HepG2 (cell line): ENCODE measurements at regions of chr17 and their contacts with region 1.

Region 1: GRCh38 chr17:58631523-58632323 is 60.1 kb downstream of the TEX14 start:
- DNase-seq: peak; percentile 99
- ATAC-seq: peak; percentile 98
- H3K4me3 ChIP-seq: peak overlapping the region; percentile 52 to 71 (median 71)
- H3K27ac ChIP-seq: peak overlapping the region; percentile 96
- H3K4me1 ChIP-seq: peaks cover 25% of the 10 kb centered on the region
- H3K27me3 ChIP-seq: no peaks in the 10 kb centered on the region
- CTCF ChIP-seq: peak; percentile 56
- EP300 ChIP-seq: peak; percentile 39 to 83; a peak in 3 of 4 replicates
- POLR2A ChIP-seq: peak; percentile 100
- RAD21 ChIP-seq: peak; percentile 82

Region 2: GRCh38 chr17:58487589-58488427 is 143.9 kb before region 1 on chr17 and contains the start of gene HSF5:
- CTCF ChIA-PET with region 1: no interaction called
- POLR2A ChIA-PET with region 1: no interaction called
- in situ Hi-C with region 1: no loop called
- intact Hi-C with region 1: no loop called
- DNase-seq: no peak
- ATAC-seq: peak; percentile 28
- H3K4me3 ChIP-seq: no peak within 1 kb of the TSS
- H3K27ac ChIP-seq: no peak within 1 kb of the TSS
- H3K4me1 ChIP-seq: peaks cover 13% of the 10 kb centered on the region
- H3K27me3 ChIP-seq: no peaks in the 10 kb centered on the region
- CTCF ChIP-seq: no peak
- EP300 ChIP-seq: no peak
- POLR2A ChIP-seq: no peak
- RAD21 ChIP-seq: no peak
- total RNA-seq, gene HSF5: not detected in 2 replicates

Region 3: GRCh38 chr17:58531661-58532554 is 99.8 kb before region 1 on chr17:
- CTCF ChIA-PET with region 1: no interaction called
- POLR2A ChIA-PET with region 1: interaction called, 73 read pairs
- in situ Hi-C with region 1: no loop called
- intact Hi-C with region 1: no loop called
- DNase-seq: no peak
- ATAC-seq: peak; percentile 77
- H3K4me3 ChIP-seq: peak overlapping the region; percentile 35 to 68 (median 48); a peak in 5 of 6 replicates
- H3K27ac ChIP-seq: no peak overlapping the region
- H3K4me1 ChIP-seq: peaks cover 65% of the 10 kb centered on the region
- H3K27me3 ChIP-seq: peaks cover 9 to 53% of the 10 kb centered on the region in 2 experiments; a peak in 3 of 5 replicates
- CTCF ChIP-seq: no peak
- EP300 ChIP-seq: no peak
- POLR2A ChIP-seq: no peak
- RAD21 ChIP-seq: no peak; the same call in 1 of the 2 replicates

Region 4: DNA sequence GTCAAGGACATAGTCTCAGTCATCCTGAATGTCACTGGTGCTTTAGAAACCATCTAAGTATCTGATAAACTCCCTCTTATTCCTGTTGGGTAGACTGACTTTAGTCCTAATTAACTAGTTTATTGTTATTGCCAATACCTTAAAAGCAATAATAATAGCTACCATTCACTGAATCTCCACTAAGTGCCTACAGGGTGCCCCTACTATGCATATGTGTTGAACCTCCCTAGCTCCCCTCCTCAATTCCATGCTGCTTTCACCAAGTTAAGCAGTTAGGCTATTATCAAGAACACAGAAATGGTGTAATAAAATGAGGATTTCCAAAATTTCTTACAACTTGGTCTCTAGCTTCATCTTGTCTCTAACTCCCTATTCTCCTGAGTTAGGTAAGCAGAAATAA is 29.7 kb before region 1 on chr17:
- CTCF ChIA-PET with region 1: no interaction called
- POLR2A ChIA-PET with region 1: interaction called, 13 read pairs
- in situ Hi-C with region 1: no loop called
- intact Hi-C with region 1: no loop called
- DNase-seq: no peak
- ATAC-seq: no peak
- H3K4me3 ChIP-seq: no peak overlapping the region
- H3K27ac ChIP-seq: no peak overlapping the region
- H3K4me1 ChIP-seq: no peaks in the 10 kb centered on the region
- H3K27me3 ChIP-seq: no peaks in the 10 kb centered on the region
- CTCF ChIP-seq: no peak
- EP300 ChIP-seq: no peak
- POLR2A ChIP-seq: no peak
- RAD21 ChIP-seq: no peak

Region 5: DNA sequence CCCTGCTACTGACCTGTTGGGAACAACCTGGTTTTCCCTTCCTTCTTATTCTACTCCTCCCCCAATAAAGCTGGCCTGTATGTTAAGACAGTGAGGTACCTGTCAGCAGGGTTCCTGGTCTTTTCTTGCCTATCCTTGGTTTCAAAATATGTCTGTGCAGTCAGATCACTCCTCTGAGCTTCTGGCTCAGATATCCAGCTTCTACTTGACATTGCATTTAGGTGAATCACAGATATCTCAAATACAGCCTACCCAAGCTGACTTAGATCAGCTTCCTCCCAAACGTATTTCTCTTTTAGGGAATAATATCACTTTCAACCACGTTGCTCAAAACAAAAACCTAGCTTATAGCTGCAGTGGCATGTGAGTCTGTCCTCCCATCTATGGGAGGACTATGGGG is 11.4 kb after region 1 on chr17:
- CTCF ChIA-PET with region 1: no interaction called
- POLR2A ChIA-PET with region 1: interaction called, 21 read pairs
- in situ Hi-C with region 1: no loop called
- intact Hi-C with region 1: no loop called
- DNase-seq: no peak
- ATAC-seq: no peak
- H3K4me3 ChIP-seq: no peak overlapping the region
- H3K27ac ChIP-seq: no peak overlapping the region
- H3K4me1 ChIP-seq: no peaks in the 10 kb centered on the region
- H3K27me3 ChIP-seq: no peaks in the 10 kb centered on the region; a peak in 1 of 5 replicates
- CTCF ChIP-seq: no peak
- EP300 ChIP-seq: no peak
- POLR2A ChIP-seq: no peak
- RAD21 ChIP-seq: no peak

Region 6: GRCh38 chr17:58679263-58680037 is 47.7 kb after region 1 on chr17:
- CTCF ChIA-PET with region 1: no interaction called
- POLR2A ChIA-PET with region 1: interaction called, 14 read pairs
- in situ Hi-C with region 1: no loop called
- intact Hi-C with region 1: no loop called
- DNase-seq: peak; percentile 78
- ATAC-seq: peak; percentile 84
- H3K4me3 ChIP-seq: no peak overlapping the region
- H3K27ac ChIP-seq: no peak overlapping the region
- H3K4me1 ChIP-seq: peaks cover 22% of the 10 kb centered on the region; the same call in 1 of the 2 replicates
- H3K27me3 ChIP-seq: 0 out of 5 replicates have a peak, but pooled peaks cover 0 to 3% of the 10 kb centered on the region in 2 experiments
- CTCF ChIP-seq: no peak
- EP300 ChIP-seq: no peak; a peak in 1 of 4 replicates
- POLR2A ChIP-seq: peak; percentile 91 to 100
- RAD21 ChIP-seq: peak; percentile 74

Region 7: DNA sequence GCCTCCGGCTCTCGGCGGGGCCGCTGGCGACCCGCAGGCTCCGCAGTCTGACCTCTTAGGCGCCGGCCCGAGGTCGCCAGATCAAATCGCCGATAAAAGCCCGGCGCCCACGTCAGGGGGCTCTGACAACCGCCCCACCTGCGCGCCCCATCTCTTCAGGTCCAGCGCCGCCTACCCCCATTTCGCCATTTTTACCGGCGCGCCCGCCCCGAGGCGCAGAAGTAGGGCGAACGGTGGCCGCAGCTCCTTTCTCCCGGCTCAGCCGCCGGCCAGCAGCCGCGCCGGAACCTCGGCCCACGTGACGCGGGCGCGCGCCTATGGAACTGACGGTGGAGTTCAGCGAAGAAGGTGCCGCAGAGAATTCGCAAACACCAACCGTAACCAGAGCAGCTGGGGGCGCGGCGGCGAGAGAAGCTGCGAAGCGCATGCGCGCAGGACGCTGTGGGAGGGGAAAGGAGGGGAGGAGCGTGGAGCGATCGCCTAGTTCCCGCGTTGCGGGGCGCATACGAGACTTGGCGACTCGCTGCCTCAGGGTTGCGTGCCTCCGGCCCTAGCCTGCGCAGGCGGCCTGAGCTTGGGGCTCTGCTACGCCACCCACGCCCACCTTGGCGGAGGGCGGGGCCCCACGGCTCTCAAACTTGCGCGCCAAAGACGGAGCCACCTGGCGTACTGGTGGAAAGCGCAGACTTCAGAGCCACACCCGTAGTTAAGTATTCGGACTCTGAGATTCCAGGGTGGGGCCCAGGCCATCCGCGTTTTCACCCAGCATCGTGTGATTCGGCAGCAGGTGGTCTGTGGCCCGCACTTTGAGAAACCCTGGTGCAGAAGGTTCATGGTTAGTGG is 475.0 kb after region 1 on chr17 and contains the start of gene TRIM37:
- CTCF ChIA-PET with region 1: no interaction called
- POLR2A ChIA-PET with region 1: interaction called, 12 read pairs
- in situ Hi-C with region 1: no loop called
- intact Hi-C with region 1: no loop called
- DNase-seq: peak; percentile 99
- ATAC-seq: peak; percentile 98
- H3K4me3 ChIP-seq: peak within 1 kb of the TSS; percentile 90 to 96 (median 94)
- H3K27ac ChIP-seq: peak within 1 kb of the TSS; percentile 84
- H3K4me1 ChIP-seq: peaks cover 36% of the 10 kb centered on the region
- H3K27me3 ChIP-seq: no peaks in the 10 kb centered on the region; a peak in 1 of 5 replicates
- CTCF ChIP-seq: peak; percentile 53
- EP300 ChIP-seq: 0 out of 4 replicates have a peak, but pooled peaks of 1 of the 2 experiments have one; percentile 14
- POLR2A ChIP-seq: peak in 1 of 2 experiments; percentile 74
- RAD21 ChIP-seq: peak; percentile 55
- total RNA-seq, gene TRIM37: 39.1 and 48.1 TPM in 2 replicates